Sciatic nerve (tissue), 2 donors: ENCODE measurements at regions of chr9 and their contacts with region 1.

Region 1: GRCh38 chr9:89000973-89001916 is 10.0 kb downstream of the S1PR3 start:
- DNase-seq: peak; percentile 95
- ATAC-seq: peak; percentile 80

Region 2: DNA sequence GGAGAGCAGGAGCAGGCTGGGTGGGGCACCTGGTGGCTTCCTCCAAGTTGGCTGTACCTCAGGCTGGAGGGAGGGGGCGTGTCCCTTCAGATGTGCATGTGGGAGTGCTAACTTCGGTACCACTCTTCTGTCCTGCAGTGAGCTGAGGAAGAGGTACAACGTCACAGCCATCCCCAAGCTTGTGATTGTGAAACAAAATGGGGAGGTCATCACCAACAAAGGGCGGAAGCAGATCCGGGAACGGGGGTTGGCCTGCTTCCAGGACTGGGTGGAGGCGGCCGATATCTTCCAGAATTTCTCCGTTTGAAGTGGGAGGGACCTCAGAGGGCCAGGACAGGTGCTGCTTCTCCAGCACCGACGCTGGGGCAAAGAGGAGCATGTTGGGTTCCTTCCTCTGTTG is 457.0 kb before region 1 on chr9:
- intact Hi-C with region 1: no loop called
- DNase-seq: no peak
- ATAC-seq: no peak

Region 3: GRCh38 chr9:88593537-88594185 is 407.6 kb before region 1 on chr9:
- intact Hi-C with region 1: loop called (anchors 5 kb)
- DNase-seq: peak; percentile 79
- ATAC-seq: peak; percentile 90

Region 4: DNA sequence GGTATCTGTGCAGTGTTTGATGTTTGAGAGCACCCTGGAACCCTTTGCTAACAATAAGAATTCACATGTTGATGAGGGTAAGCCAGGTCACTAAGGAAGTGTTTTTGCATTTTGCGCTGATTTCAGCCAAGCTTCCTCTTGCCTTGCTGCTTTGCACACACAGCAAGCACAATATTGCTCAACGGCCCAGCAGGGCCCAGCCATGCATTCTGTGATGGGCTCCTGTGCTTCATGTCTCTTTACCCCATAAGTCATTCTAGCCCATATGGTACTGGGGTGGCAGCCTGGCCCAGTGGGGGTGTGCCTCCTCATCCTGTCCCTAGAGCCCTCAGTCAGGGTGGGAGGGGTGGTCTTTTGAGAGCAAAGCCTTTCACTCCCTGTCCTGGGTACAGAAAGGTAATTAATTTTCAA is 1084.9 kb after region 1 on chr9:
- intact Hi-C with region 1: no loop called
- DNase-seq: no peak
- ATAC-seq: peak; percentile 50